Posterior vena cava (tissue), 2 donors: ENCODE measurements at regions of chr10 and their contacts with region 1.

Region 1: DNA sequence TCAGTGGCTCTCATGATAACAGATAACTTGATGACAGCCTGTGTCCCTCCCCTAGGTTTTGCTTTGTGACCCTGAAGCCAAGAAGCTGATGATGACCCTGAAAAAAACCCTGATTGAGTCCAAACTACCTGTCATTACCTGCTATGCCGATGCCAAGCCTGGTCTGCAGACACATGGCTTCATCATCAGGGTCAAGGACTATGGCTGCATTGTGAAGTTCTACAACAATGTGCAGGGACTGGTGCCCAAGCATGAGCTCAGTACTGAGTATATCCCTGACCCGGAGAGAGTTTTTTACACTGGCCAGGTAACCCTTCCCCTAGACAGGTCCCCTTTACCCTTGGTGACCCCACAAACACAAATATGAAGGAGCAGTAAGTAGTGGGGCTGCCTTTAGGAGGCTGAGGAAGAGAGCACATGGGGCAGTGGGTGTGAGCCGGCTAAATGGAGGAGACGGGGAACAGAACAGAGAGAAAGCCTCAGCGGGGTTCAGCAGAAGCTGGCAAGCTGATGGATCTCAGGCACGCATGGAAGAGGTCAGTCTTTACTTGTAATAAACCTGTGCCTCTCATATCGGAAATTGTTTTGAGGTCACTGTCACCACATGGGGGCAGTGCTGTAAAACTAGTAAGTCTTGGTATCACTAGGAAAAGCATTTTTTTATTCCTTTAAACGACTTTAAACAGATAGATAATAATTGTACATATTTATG is 20.2 kb downstream of the PDCD11 start:
- DNase-seq: no peak

Region 2: DNA sequence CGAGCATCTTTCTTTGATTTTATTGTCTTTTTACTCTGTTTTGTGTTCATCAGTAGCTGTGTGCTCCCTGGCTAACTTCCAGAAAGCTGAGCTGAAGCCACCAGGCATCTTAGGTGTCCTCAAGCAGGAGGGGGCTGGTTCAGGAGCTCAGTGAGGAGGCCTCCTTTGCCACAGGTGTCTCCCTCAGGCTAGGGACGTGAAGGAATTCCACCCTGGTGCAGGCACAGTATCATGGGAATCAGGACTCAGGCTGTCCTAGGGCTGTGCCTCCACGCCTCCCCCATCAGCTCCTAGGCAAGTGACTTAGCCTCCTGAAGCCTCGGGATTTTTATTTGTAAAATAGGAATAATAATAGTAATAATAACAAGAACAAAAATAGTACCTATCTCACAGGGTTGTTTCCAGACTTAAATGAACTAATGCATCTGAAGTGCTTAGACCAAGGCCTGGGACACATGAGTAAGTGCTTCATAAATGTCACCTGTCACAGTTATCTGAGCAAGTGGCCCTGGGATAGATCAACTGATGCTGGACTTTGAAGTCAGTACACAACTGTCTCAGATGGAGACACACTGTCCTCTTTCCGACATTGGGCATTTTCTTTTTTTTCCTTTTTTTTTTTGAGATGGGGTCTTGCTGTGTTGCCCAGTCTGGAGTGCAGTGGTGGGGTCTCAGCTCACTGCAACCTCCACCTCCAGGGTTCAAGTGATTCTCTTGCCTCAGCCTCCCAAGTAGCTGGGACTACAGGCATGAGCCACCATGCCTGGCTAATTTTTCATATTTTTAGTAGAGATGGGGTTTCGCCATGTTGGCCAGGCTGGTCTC is 70.0 kb after region 1 on chr10:
- intact Hi-C with region 1: loop called (anchors 2 to 5 kb)
- DNase-seq: no peak